ENCODE measurements at regions of chr5 and their contacts with region 1.

Region 1: GRCh38 chr5:137320056-137321045 is 178.8 kb downstream of the SPOCK1 start:
- DNase-seq: no peak
- ATAC-seq: peak; percentile 46 to 64
- H3K4me3 ChIP-seq: no peak overlapping the region
- H3K27ac ChIP-seq: no peak overlapping the region
- H3K4me1 ChIP-seq: no peaks in the 10 kb centered on the region
- H3K27me3 ChIP-seq: peaks cover 8% of the 10 kb centered on the region
- CTCF ChIP-seq: peak; percentile 69

Region 2: DNA sequence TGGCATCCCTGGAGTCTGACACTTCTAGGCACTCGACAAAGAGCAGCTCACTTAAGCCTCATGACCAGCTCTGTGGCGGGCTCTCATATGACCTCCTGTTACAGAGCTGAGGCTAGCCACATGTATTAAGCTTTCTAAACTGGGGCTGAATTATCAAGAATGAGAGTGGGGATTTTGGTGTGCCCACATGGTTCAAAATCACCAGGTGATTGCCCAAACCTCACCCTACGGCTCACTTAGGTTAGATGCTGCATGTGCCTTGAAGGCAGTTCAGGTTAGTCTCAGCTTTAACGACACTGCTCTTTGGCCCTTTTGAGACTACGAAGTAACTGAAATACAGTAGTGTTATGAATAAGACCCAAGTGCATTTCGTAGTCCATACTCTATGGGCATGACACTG is 1088.0 kb before region 1 on chr5:
- intact Hi-C with region 1: no loop called
- DNase-seq: no peak
- ATAC-seq: no peak
- H3K4me3 ChIP-seq: no peak overlapping the region
- H3K27ac ChIP-seq: no peak overlapping the region
- H3K4me1 ChIP-seq: no peaks in the 10 kb centered on the region
- H3K27me3 ChIP-seq: peaks cover 17% of the 10 kb centered on the region
- CTCF ChIP-seq: no peak

Region 3: GRCh38 chr5:137264573-137264972 is 55.8 kb before region 1 on chr5:
- intact Hi-C with region 1: no loop called
- DNase-seq: no peak
- ATAC-seq: no peak
- H3K4me3 ChIP-seq: no peak overlapping the region
- H3K27ac ChIP-seq: no peak overlapping the region
- H3K4me1 ChIP-seq: no peaks in the 10 kb centered on the region
- H3K27me3 ChIP-seq: no peaks in the 10 kb centered on the region
- CTCF ChIP-seq: no peak

Region 4: DNA sequence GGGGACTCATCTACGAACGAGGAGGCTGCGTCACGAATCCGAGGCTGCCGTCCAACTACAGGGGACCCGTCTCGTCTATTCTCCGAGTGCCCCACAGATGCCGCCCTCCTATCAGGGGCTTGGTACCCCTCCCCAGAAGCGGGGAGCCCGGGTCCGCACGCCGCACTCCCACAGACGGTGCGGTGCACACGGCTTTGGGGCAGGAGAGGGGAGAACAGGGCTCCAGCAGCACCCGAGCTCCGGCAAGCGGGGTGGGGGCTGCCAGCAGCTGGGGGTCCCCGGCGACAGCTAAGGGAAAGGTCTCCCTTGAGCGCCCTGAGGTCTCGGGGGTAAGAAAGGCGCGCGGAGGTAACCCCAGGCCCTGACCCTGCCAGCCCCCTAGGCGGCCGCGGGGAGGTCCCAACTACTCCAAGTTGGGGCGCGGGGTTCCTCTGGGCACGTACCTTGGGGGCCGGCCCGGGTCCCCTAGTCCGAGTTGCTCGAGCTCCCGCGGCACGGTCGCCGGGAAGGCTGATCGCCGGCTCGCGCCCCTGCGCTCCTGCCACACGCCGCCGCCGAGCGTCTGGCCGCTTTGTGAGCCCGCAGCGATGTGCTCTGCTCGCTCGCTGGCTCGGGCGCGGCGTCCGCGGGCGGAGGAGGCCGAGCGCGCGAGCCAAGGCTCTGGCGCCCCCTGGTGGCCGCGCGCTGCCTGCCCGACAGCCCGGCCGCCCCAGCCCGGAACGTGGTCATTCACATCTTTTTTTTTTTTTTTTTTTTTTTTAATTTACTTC is 178.6 kb after region 1 on chr5 and contains the start of gene SPOCK1:
- intact Hi-C with region 1: loop called (anchors 10 kb)
- DNase-seq: peak; percentile 75
- ATAC-seq: peak; percentile 96 to 97
- H3K4me3 ChIP-seq: peak within 1 kb of the TSS; percentile 44
- H3K27ac ChIP-seq: no peak within 1 kb of the TSS
- H3K4me1 ChIP-seq: peaks cover 6% of the 10 kb centered on the region
- H3K27me3 ChIP-seq: peaks cover 29% of the 10 kb centered on the region
- CTCF ChIP-seq: peak; percentile 83
- total RNA-seq, gene SPOCK1: 8.4 TPM